Endothelial cell of umbilical vein (primary cell): ENCODE measurements at regions of chr2 and their contacts with region 1.

Region 1: GRCh38 chr2:64062829-64063228 is 43.6 kb upstream of the VPS54 start:
- DNase-seq: peak; percentile 65
- H3K4me3 ChIP-seq: no peak overlapping the region
- H3K27ac ChIP-seq: peak overlapping the region; percentile 99
- H3K4me1 ChIP-seq: peaks cover 24% of the 10 kb centered on the region
- H3K27me3 ChIP-seq: no peaks in the 10 kb centered on the region
- CTCF ChIP-seq: no peak
- POLR2A ChIP-seq: no peak

Region 2: GRCh38 chr2:63841254-63842022 is 221.4 kb before region 1 on chr2 and contains the start of gene UGP2:
- CTCF ChIA-PET with region 1: no interaction called
- POLR2A ChIA-PET with region 1: no interaction called
- dilution Hi-C with region 1: no loop called
- intact Hi-C with region 1: no loop called
- DNase-seq: peak; percentile 92
- H3K4me3 ChIP-seq: peak within 1 kb of the TSS; percentile 91 to 96 (median 95)
- H3K27ac ChIP-seq: peak within 1 kb of the TSS; percentile 81
- H3K4me1 ChIP-seq: peaks cover 16% of the 10 kb centered on the region
- H3K27me3 ChIP-seq: no peaks in the 10 kb centered on the region
- CTCF ChIP-seq: peak in 1 of 2 donors; percentile 26
- POLR2A ChIP-seq: peak; percentile 84
- total RNA-seq, gene UGP2: 57.7 and 63.9 TPM in 2 replicates

Region 3: GRCh38 chr2:64018923-64019718 is 43.7 kb before region 1 on chr2 and contains the start of gene VPS54:
- CTCF ChIA-PET with region 1: no interaction called
- POLR2A ChIA-PET with region 1: no interaction called
- dilution Hi-C with region 1: no loop called
- intact Hi-C with region 1: loop called (anchors 2 kb)
- DNase-seq: peak; percentile 50
- H3K4me3 ChIP-seq: peak within 1 kb of the TSS; percentile 67 to 92 (median 90)
- H3K27ac ChIP-seq: peak within 1 kb of the TSS; percentile 63
- H3K4me1 ChIP-seq: peaks cover 22% of the 10 kb centered on the region
- H3K27me3 ChIP-seq: no peaks in the 10 kb centered on the region
- CTCF ChIP-seq: no peak
- POLR2A ChIP-seq: peak; percentile 47
- total RNA-seq, gene VPS54: 17.6 and 17.7 TPM in 2 replicates

Region 4: GRCh38 chr2:64101141-64101591 is 38.3 kb after region 1 on chr2:
- CTCF ChIA-PET with region 1: interaction called, 7 read pairs
- POLR2A ChIA-PET with region 1: no interaction called
- dilution Hi-C with region 1: no loop called
- intact Hi-C with region 1: loop called (anchors 2 kb)
- DNase-seq: peak; percentile 84
- H3K4me3 ChIP-seq: peak overlapping the region in 1 of 3 experiments; percentile 34
- H3K27ac ChIP-seq: peak overlapping the region; percentile 60
- H3K4me1 ChIP-seq: peaks cover 39% of the 10 kb centered on the region
- H3K27me3 ChIP-seq: no peaks in the 10 kb centered on the region
- CTCF ChIP-seq: no peak
- POLR2A ChIP-seq: no peak

Region 5: DNA sequence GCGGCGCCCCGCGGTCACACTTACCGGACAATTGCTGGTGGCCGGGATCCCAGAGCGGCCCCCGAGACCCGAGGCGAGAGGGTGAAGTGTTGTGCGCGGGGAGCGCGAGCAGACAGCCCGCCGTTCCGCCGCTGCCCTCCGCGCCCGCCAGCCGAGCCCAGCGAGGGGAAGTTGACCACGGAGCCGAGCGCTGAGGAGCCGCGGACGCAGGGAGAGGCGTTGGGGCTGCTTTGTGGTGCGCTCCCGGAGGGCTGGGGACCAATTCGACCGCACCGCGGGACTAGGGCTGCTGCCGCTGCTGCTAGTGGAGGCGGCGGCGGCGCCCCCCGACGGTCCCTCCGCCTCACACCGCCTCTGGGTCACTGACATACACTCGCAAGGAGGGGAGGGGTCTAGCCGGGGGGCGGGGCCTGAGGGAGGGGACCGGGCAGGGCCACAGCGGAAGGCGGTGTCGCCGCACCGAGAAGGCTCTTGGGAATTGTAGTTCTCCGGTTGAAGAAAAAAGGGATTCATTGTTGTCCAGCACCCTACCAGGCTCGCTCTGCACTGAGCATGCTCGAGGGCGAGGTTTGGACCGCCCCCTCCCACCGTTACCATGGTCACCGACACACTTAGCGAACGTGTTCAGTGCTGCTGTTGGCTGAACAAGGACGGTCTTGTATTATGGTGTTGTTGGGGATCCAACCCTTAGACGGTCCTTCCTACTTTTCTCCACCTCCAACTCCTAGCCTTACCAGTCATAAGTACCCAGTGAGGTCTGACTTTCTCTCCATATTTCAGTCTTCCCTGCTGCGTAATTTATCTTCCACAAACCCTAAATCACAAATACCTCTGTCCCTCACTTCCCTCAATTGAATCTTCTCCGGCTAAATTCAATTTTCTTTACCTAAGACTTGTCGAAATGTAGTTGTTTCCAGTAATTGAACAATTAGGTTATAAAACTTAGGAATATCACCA is 81.5 kb after region 1 on chr2 and contains the start of gene PELI1:
- CTCF ChIA-PET with region 1: interaction called, 4 read pairs
- POLR2A ChIA-PET with region 1: no interaction called
- dilution Hi-C with region 1: no loop called
- intact Hi-C with region 1: loop called (anchors 1 kb)
- DNase-seq: peak; percentile 99
- H3K4me3 ChIP-seq: peak within 1 kb of the TSS; percentile 70 to 90 (median 83)
- H3K27ac ChIP-seq: peak within 1 kb of the TSS; percentile 74
- H3K4me1 ChIP-seq: peaks cover 18% of the 10 kb centered on the region
- H3K27me3 ChIP-seq: peaks cover 0 to 4% of the 10 kb centered on the region in 2 experiments
- CTCF ChIP-seq: peak in 1 of 2 donors; percentile 34
- POLR2A ChIP-seq: peak; percentile 95
- total RNA-seq, gene PELI1: 30.9 and 39.9 TPM in 2 replicates

Region 6: DNA sequence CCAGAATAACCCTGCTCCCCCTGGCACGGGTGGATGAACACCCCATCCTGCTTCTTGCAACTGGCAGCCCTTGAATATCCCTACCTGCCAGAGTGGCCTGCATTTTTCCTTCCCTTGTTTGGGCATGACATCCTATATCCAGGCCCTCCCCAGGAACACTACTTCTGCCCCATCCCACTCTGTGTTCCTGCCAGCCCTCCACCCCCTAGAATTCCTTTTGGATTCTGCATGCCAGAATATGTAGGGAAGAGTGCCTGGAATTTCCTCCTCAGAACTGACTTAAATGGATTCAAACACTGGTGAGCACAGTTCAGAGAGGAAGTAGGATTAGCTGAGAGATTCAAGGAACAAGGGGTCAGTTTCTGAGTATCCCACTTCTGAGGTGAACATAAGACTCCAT is 204.9 kb after region 1 on chr2:
- CTCF ChIA-PET with region 1: no interaction called
- POLR2A ChIA-PET with region 1: interaction called, 14 read pairs
- dilution Hi-C with region 1: no loop called
- intact Hi-C with region 1: loop called (anchors 1 kb)
- DNase-seq: peak; percentile 73
- H3K4me3 ChIP-seq: no peak overlapping the region
- H3K27ac ChIP-seq: peak overlapping the region; percentile 96
- H3K4me1 ChIP-seq: peaks cover 47% of the 10 kb centered on the region
- H3K27me3 ChIP-seq: no peaks in the 10 kb centered on the region
- CTCF ChIP-seq: no peak
- POLR2A ChIP-seq: no peak